Vagina (tissue), 2 donors: ENCODE measurements at regions of chr21 and their contacts with region 1.

Region 1: DNA sequence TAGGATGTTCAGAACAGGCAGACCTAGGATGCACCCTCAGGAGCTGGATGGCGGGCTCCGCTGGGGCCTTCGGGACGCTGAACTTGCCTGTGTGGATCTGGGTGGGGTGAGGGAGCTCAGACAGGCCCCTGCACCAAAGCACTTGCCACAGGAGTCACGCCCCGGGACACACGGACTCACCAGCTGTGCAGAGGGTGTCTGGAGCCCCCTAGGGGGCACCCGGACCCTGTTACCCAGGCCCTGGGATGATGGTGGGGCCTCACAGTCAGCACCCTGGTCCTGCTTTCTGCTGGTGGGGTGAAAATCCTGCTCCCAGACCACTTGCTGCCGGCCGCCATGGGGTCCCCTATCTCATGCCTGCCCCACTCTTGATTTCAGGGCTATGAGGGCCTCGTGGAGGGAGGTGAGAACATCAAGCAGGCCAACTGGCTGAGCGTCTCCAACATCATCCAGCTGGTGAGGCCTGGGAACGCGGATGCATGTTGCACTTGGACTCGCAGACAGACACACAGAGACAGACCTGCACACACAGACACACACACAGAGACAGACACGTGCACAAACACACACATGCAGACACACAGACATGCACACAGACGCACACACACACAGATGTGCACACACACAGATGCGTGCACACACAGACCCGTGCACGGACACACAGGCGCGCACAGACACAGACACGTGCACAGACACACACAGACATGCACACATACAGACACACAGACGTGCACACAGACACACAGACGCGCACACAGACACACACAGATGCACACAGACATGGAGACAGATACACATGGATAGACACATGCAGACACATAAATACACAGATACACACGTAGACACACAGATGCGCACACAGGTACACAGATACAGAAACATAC is 11.0 kb downstream of the PFKL start:
- DNase-seq: no peak
- H3K4me3 ChIP-seq: no peak overlapping the region
- H3K27ac ChIP-seq: no peak overlapping the region
- H3K4me1 ChIP-seq: peaks cover 6% of the 10 kb centered on the region
- H3K27me3 ChIP-seq: no peaks in the 10 kb centered on the region
- CTCF ChIP-seq: no peak
- POLR2A ChIP-seq: no peak

Region 2: GRCh38 chr21:43805275-43805800 is 505.5 kb before region 1 on chr21:
- intact Hi-C with region 1: loop called (anchors 10 kb)
- DNase-seq: no peak
- H3K4me3 ChIP-seq: no peak overlapping the region
- H3K27ac ChIP-seq: no peak overlapping the region
- H3K4me1 ChIP-seq: peaks cover 15% of the 10 kb centered on the region
- H3K27me3 ChIP-seq: no peaks in the 10 kb centered on the region
- CTCF ChIP-seq: no peak
- POLR2A ChIP-seq: no peak

Region 3: GRCh38 chr21:44329086-44329889 is 18.4 kb after region 1 on chr21:
- intact Hi-C with region 1: loop called (anchors 2 kb)
- DNase-seq: no peak
- H3K4me3 ChIP-seq: no peak overlapping the region
- H3K27ac ChIP-seq: no peak overlapping the region
- H3K4me1 ChIP-seq: no peaks in the 10 kb centered on the region
- H3K27me3 ChIP-seq: no peaks in the 10 kb centered on the region
- CTCF ChIP-seq: no peak
- POLR2A ChIP-seq: no peak